Sigmoid colon (tissue), 7 donors: ENCODE measurements at regions of chr4 and their contacts with region 1.

Region 1: GRCh38 chr4:74692972-74693371 is 101.4 kb downstream of the BTC start:
- DNase-seq: peak; percentile 93
- H3K4me3 ChIP-seq: no peak overlapping the region
- H3K27ac ChIP-seq: peak overlapping the region; percentile 72 to 80 (median 76)
- H3K4me1 ChIP-seq: peaks cover 0 to 55% (median 39%) of the 10 kb centered on the region in 4 donors
- H3K27me3 ChIP-seq: no peaks in the 10 kb centered on the region
- CTCF ChIP-seq: no peak
- EP300 ChIP-seq: peak; percentile 32 to 84 (median 69)
- POLR2A ChIP-seq: no peak

Region 2: DNA sequence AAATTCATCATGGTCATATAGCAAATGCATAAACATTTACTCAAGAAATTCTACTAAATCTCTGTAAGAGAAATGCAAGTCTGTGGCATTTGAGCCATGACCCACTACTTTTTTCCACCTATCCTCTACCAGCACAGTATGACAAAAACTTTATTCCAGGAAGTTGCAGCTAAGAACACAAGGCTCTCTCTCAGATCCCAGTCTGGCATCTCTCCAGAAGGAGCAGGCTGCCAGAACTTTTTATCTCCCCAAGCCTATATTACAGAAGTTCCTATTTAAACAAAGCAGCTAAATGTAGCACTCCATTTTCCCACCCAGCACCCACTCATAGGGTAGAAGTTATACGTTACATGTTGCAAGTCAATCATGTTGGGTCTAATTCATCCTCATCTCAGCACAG is 434.0 kb before region 1 on chr4:
- intact Hi-C with region 1: no loop called
- DNase-seq: no peak
- H3K4me3 ChIP-seq: no peak overlapping the region
- H3K27ac ChIP-seq: no peak overlapping the region
- H3K4me1 ChIP-seq: peaks cover 0 to 4% (median 0%) of the 10 kb centered on the region in 4 donors
- H3K27me3 ChIP-seq: no peaks in the 10 kb centered on the region
- CTCF ChIP-seq: no peak
- EP300 ChIP-seq: no peak
- POLR2A ChIP-seq: no peak

Region 3: GRCh38 chr4:74755491-74755921 is 62.5 kb after region 1 on chr4:
- intact Hi-C with region 1: loop called (anchors 5 kb)
- DNase-seq: peak; percentile 76
- H3K4me3 ChIP-seq: no peak overlapping the region
- H3K27ac ChIP-seq: peak overlapping the region; percentile 58 to 76 (median 68)
- H3K4me1 ChIP-seq: peaks cover 0 to 44% (median 31%) of the 10 kb centered on the region in 4 donors
- H3K27me3 ChIP-seq: no peaks in the 10 kb centered on the region
- CTCF ChIP-seq: no peak
- EP300 ChIP-seq: no peak
- POLR2A ChIP-seq: no peak

Region 4: GRCh38 chr4:74793757-74794340 is 100.9 kb after region 1 on chr4:
- intact Hi-C with region 1: loop called (anchors 2 kb)
- DNase-seq: peak; percentile 81
- H3K4me3 ChIP-seq: peak overlapping the region; percentile 65 to 74 (median 68)
- H3K27ac ChIP-seq: peak overlapping the region; percentile 89 to 95 (median 92)
- H3K4me1 ChIP-seq: peaks cover 0 to 33% (median 26%) of the 10 kb centered on the region in 4 donors
- H3K27me3 ChIP-seq: no peaks in the 10 kb centered on the region
- CTCF ChIP-seq: peak; percentile 9 to 55 (median 42)
- EP300 ChIP-seq: no peak
- POLR2A ChIP-seq: no peak

Region 5: GRCh38 chr4:74814052-74814451 is 121.1 kb after region 1 on chr4:
- intact Hi-C with region 1: no loop called
- DNase-seq: no peak
- H3K4me3 ChIP-seq: no peak overlapping the region
- H3K27ac ChIP-seq: no peak overlapping the region
- H3K4me1 ChIP-seq: peaks cover 0 to 5% (median 0%) of the 10 kb centered on the region in 4 donors
- H3K27me3 ChIP-seq: no peaks in the 10 kb centered on the region
- CTCF ChIP-seq: no peak
- EP300 ChIP-seq: no peak
- POLR2A ChIP-seq: no peak